H1 (cell line): ENCODE measurements at regions of chr22 and their contacts with region 1.

Region 1: GRCh38 chr22:46269564-46269963 is 1.8 kb downstream of the TTC38 start:
- DNase-seq: no peak
- H3K4me3 ChIP-seq: no peak overlapping the region
- H3K27ac ChIP-seq: no peak overlapping the region
- H3K4me1 ChIP-seq: no peaks in the 10 kb centered on the region; a peak in 1 of 7 replicates
- H3K27me3 ChIP-seq: peaks cover 0 to 3% (median under 1%) of the 10 kb centered on the region in 4 experiments; a peak in 5 of 7 replicates
- CTCF ChIP-seq: no peak
- EP300 ChIP-seq: no peak
- POLR2A ChIP-seq: no peak
- RAD21 ChIP-seq: no peak

Region 2: GRCh38 chr22:46280999-46281623 is 11.5 kb after region 1 on chr22:
- CTCF ChIA-PET with region 1: interaction called, 11 read pairs
- POLR2A ChIA-PET with region 1: interaction called, 13 read pairs
- DNase-seq: no peak
- H3K4me3 ChIP-seq: no peak overlapping the region
- H3K27ac ChIP-seq: no peak overlapping the region
- H3K4me1 ChIP-seq: no peaks in the 10 kb centered on the region
- H3K27me3 ChIP-seq: no peaks in the 10 kb centered on the region
- CTCF ChIP-seq: no peak
- EP300 ChIP-seq: no peak
- POLR2A ChIP-seq: no peak
- RAD21 ChIP-seq: no peak